ENCODE measurements at regions of chr2 and their contacts with region 1.

Region 1: DNA sequence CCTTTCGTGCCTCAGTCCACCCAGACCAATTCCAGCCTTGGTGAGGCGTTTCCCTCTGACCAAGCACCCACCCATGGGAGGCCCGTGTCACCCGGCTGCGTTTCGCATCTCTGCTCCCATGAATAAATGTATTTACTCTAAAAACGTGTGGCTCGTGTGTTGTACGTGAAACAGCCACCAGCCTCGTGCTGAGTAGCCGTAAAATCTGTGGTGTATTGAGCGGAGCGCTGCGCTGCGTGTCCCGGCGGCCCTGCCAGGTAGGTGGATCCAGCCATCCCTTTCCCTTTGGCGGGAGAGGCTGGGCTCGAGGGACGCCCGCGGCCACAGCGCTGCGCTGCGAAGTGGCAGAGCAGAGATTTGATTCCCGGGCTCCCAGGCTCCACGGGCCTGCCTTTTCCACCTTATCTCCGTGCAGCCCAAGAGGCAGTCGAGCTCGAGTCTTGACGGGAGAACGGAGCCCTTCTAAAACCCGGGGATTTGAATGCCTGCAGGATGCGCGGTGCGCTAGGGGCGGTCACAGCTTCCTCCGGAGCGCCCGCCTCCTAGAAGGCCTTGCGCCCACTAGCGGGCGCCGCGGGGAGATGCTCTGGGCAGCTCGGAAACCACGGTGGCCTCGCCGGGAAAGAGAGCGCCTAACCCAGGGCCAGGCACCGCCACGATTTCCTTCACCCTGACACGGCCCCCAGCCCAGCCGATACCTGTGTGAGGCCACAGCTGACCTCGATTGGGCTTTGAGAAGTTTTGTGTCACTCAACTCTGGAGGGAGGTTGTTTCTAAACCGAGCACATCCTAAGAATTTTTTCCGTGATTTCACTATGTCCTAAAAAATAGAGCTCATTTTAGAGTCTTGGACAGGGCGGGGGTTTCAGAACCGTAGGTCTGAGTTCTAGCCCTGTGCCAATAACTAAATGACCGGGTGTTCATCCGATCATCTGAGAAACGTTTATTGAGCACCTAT is 3.9 kb upstream of the PSMD1 start:
- DNase-seq: peak; percentile 89
- H3K4me3 Mint-ChIP-seq: peak overlapping the region; percentile 87
- H3K27ac Mint-ChIP-seq: peak overlapping the region; percentile 72
- H3K4me1 Mint-ChIP-seq: peaks cover 30% of the 10 kb centered on the region
- H3K27me3 Mint-ChIP-seq: peaks cover 56% of the 10 kb centered on the region

Region 2: DNA sequence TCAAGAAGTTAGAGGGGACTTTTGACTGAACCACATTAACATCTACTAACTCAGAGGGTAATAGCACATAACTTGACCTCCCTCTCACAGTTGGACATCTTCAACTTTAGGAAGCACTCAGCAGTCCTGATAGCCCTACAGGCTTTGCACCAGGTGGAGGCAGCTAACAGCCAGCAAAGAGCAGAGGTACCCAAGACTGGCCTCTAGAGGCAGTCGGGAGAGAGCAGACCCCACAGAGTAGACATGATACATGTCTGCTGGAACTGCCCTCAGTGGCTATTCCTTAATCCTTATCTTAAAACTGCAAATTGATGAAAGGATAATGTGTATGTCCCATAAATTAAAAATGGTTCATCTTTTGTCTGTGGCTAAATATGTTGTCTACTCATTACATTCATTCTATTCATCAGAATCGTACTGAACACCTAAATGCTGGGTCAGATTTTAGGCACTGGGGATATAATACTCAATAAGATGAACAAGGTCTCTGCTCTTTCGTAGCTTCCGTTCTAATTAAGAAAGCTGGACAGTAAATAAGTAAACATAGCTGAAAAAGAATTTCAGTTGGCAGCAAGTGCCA is 290.4 kb before region 1 on chr2:
- CTCF ChIA-PET with region 1: no interaction called
- DNase-seq: peak; percentile 43
- H3K4me3 Mint-ChIP-seq: no peak overlapping the region
- H3K27ac Mint-ChIP-seq: no peak overlapping the region
- H3K4me1 Mint-ChIP-seq: peaks cover 52% of the 10 kb centered on the region
- H3K27me3 Mint-ChIP-seq: no peaks in the 10 kb centered on the region

Region 3: DNA sequence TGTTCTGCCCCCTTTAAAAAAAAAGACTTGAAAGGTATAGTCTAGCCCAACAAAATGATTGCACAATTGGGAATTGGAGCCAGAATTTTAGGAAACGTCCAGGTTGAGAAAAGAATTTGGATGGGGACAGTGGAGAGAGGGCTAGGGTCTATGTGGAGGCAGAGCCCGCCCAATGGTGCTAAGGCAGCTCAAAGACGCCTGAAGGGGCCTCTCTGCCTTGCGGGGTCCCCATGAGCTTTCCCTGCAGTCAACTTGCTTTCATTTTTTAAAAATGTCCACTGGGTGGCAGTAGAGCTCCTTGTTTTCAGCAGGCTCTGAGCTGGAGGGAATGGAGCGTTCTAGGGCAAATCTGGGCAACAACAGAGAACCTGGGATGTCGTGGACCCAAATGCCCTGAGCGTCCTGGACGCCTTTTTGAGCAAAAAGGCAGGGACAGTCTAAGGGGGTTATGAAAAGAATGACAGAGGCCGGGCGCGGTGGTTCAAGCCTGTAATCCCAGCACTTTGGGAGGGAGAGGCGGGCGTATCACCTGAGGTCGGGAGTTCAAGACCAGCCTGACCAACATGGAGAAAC is 228.3 kb before region 1 on chr2:
- CTCF ChIA-PET with region 1: interaction called, 18 read pairs
- DNase-seq: peak; percentile 62
- H3K4me3 Mint-ChIP-seq: no peak overlapping the region
- H3K27ac Mint-ChIP-seq: peak overlapping the region; percentile 24
- H3K4me1 Mint-ChIP-seq: peaks cover 22% of the 10 kb centered on the region
- H3K27me3 Mint-ChIP-seq: peaks cover 46% of the 10 kb centered on the region

Region 4: DNA sequence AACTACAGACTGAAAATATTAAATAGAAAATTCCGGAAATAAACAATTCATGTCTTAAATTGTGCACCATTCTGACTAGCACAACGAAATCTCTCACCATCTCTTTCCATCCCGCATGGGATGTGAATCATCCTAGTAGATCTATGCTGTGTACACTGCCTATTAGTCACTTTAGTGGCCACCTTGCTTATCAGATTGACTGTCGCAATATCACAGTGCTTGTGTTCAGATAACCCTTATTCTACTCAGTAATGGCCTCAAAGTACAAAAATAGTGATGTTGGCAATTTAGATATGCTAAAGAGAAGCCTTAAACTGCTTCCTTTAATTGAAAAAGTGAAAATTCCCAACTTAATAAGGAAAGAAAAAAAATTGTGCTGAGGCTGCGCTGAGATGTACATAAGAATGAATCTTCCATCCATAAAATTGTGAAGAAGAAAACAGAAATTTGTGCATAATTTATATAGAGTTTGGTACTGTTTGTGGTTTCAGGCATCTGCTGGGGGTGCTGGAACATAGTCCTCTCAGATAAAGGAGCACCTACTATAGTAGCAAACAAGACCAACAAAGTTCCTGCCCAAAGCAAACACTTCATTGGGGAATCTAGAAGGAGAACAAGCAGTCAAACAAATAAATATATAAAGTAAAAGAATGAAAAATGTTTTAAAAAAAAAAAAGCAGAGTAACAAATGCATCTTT is 15.9 kb after region 1 on chr2:
- CTCF ChIA-PET with region 1: interaction called, 12 read pairs
- DNase-seq: no peak
- H3K4me3 Mint-ChIP-seq: no peak overlapping the region
- H3K27ac Mint-ChIP-seq: no peak overlapping the region
- H3K4me1 Mint-ChIP-seq: no peaks in the 10 kb centered on the region
- H3K27me3 Mint-ChIP-seq: no peaks in the 10 kb centered on the region